ENCODE measurements at regions of chr1 and their contacts with region 1.

Region 1: DNA sequence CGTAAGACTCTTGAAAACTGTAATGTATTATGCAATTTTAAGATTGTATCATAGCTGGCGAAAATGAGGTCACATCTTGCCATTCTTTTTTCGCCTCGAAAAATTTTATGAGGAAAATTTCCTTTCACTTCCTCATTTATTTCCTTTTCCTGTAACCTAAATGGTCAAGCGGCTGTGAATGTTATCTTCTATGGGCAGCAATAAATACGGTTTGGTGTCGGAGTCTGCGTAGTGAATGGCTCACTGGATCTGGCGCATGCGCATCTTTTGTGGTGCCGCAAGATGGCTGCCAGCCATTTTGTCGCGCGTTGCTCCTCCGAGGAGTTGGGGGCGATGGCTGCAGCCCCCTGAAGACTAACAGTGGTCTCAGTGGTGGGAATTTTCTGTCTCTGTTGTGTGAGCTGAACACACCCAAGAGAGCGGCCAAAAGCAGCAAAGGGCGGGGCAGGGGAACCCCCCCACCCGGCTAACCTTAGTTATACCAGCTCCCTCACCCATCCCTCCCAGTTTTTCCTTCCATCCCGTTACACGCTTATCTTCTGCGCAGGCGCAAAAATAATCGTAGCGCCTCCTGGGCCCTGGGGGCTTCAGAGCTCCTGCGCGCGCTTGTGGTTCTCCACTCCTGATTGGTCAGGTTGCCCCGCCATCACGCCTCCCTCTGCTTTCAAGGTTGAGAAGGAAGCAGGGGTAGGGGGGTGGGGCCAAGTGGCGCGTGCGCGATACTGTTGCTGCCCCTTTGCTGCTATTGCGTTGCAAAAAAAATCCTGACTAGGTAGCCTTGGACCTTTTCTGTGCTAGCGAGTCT is at the start of gene RPRD2:
- DNase-seq: peak; percentile 95 to 100 (median 99)
- ATAC-seq: peak; percentile 93
- H3K4me3 ChIP-seq: peak within 1 kb of the TSS; percentile 70
- H3K4me3 Mint-ChIP-seq: peak within 1 kb of the TSS; percentile 100
- H3K27ac ChIP-seq: peak within 1 kb of the TSS; percentile 93 to 97
- H3K27ac Mint-ChIP-seq: peak within 1 kb of the TSS; percentile 96
- H3K4me1 ChIP-seq: peaks cover 17% of the 10 kb centered on the region
- H3K4me1 Mint-ChIP-seq: peaks cover 37% of the 10 kb centered on the region
- H3K27me3 ChIP-seq: no peaks in the 10 kb centered on the region
- H3K27me3 Mint-ChIP-seq: no peaks in the 10 kb centered on the region
- CTCF ChIP-seq: no peak
- total RNA-seq, gene RPRD2: 27.1 to 27.9 TPM

Region 2: GRCh38 chr1:149886396-149887195 is 477.0 kb before region 1 on chr1:
- CTCF ChIA-PET with region 1: no interaction called
- POLR2A ChIA-PET with region 1: interaction called, 61 read pairs
- intact Hi-C with region 1: no loop called
- DNase-seq: peak; percentile 67 to 98 (median 82)
- ATAC-seq: peak; percentile 65
- H3K4me3 ChIP-seq: peak overlapping the region; percentile 87
- H3K4me3 Mint-ChIP-seq: no peak overlapping the region
- H3K27ac ChIP-seq: peak overlapping the region; percentile 91 to 96
- H3K27ac Mint-ChIP-seq: no peak overlapping the region
- H3K4me1 ChIP-seq: peaks cover 31% of the 10 kb centered on the region
- H3K4me1 Mint-ChIP-seq: peaks cover 10% of the 10 kb centered on the region
- H3K27me3 ChIP-seq: no peaks in the 10 kb centered on the region
- H3K27me3 Mint-ChIP-seq: no peaks in the 10 kb centered on the region
- CTCF ChIP-seq: no peak

Region 3: DNA sequence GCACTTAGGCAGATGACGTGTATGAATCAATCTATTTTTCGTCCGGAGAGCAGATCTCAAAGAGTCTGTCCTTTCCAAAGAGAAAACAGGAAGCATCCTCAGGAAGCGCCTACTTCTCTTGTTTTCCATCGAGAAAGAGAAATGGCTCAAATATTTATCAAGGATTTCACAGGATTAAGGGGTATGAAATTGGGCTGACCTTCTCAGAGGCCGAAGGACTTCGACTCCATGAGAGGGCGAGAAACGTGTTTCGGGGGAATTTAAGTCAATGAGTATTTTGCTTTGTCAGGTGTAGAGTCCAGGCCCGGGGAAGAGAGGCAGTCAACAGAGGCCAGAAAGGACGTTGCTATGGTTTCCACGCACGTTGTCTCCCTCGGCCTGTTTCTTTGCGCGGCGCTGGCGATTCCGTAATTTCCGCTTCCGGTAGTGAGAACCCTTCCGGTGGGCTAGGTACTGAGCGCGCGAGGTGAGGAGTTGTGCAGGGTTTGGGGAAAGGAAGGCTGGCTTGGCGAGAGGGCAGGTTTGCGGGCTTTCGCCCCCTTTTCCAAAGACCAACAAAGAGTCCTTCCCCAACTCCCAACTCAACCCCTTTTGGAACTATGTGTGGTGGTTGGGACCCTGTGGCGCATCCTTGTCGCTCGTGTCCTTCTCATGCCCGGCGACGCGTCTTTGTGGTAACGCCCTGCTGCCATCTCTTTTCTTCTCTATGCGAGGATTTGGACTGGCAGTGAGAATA is 70.0 kb before region 1 on chr1 and contains the start of gene MRPS21:
- CTCF ChIA-PET with region 1: no interaction called
- POLR2A ChIA-PET with region 1: interaction called, 3 read pairs
- intact Hi-C with region 1: loop called in 1 of 2 experiments (anchors 5 kb)
- DNase-seq: peak; percentile 73 to 95 (median 80)
- ATAC-seq: peak; percentile 95
- H3K4me3 ChIP-seq: peak within 1 kb of the TSS; percentile 80
- H3K4me3 Mint-ChIP-seq: peak within 1 kb of the TSS; percentile 92
- H3K27ac ChIP-seq: peak within 1 kb of the TSS; percentile 78 to 95
- H3K27ac Mint-ChIP-seq: peak within 1 kb of the TSS; percentile 96
- H3K4me1 ChIP-seq: peaks cover 19% of the 10 kb centered on the region
- H3K4me1 Mint-ChIP-seq: peaks cover 23% of the 10 kb centered on the region
- H3K27me3 ChIP-seq: no peaks in the 10 kb centered on the region
- H3K27me3 Mint-ChIP-seq: no peaks in the 10 kb centered on the region
- CTCF ChIP-seq: no peak
- total RNA-seq, gene MRPS21: 48.5 to 52.0 TPM

Region 4: DNA sequence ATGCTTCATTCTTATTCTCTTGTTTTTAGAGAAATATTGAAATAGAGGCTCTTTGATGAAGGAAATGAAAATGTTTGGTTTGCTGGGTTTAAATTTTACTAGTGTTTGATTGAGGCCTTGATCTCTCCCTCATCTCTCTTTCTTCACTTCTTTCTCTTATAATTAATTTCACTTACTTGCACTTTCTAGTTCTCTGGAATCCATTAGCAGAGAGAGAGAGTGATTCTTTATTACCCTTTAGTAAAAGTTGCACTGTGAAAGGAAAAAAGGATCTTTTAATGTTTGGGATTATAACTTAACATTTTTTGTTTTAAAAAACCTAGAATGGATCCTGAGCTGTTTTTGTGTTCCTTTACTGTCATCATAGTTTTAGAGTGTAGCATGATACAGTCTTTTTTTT is 12.5 kb after region 1 on chr1:
- CTCF ChIA-PET with region 1: no interaction called
- POLR2A ChIA-PET with region 1: interaction called, 27 read pairs
- intact Hi-C with region 1: no loop called
- DNase-seq: no peak
- ATAC-seq: no peak
- H3K4me3 ChIP-seq: no peak overlapping the region
- H3K4me3 Mint-ChIP-seq: no peak overlapping the region
- H3K27ac ChIP-seq: no peak overlapping the region
- H3K27ac Mint-ChIP-seq: peak overlapping the region; percentile 78
- H3K4me1 ChIP-seq: peaks cover 31% of the 10 kb centered on the region
- H3K4me1 Mint-ChIP-seq: peaks cover 64% of the 10 kb centered on the region
- H3K27me3 ChIP-seq: no peaks in the 10 kb centered on the region
- H3K27me3 Mint-ChIP-seq: no peaks in the 10 kb centered on the region
- CTCF ChIP-seq: no peak

Region 5: DNA sequence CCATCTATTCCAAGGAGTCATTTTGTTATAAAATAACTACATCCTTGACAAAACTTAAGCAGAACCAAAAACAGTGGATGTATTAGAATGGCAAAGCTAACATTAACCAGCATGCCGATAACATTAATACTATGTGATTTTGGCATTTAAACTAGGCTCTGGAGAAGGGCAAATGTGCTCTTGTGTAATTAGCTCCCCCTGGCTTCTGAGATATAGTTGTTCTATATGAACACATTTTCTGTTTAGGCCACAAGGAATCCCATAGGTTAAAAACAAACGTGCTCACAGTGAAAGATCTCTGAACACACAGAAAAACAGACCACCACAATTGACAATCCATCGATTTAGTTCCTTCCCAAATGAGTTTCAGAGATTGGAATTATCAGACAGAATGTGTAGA is 66.2 kb after region 1 on chr1:
- CTCF ChIA-PET with region 1: interaction called, 4 read pairs
- POLR2A ChIA-PET with region 1: interaction called, 4 read pairs
- intact Hi-C with region 1: loop called (anchors 2 to 5 kb)
- DNase-seq: peak in 3 of 14 experiments; percentile 35 to 39 (median 36)
- ATAC-seq: peak; percentile 52
- H3K4me3 ChIP-seq: no peak overlapping the region
- H3K4me3 Mint-ChIP-seq: no peak overlapping the region
- H3K27ac ChIP-seq: no peak overlapping the region
- H3K27ac Mint-ChIP-seq: peak overlapping the region; percentile 41
- H3K4me1 ChIP-seq: no peaks in the 10 kb centered on the region
- H3K4me1 Mint-ChIP-seq: peaks cover 18% of the 10 kb centered on the region
- H3K27me3 ChIP-seq: no peaks in the 10 kb centered on the region
- H3K27me3 Mint-ChIP-seq: no peaks in the 10 kb centered on the region
- CTCF ChIP-seq: peak; percentile 54

Region 6: DNA sequence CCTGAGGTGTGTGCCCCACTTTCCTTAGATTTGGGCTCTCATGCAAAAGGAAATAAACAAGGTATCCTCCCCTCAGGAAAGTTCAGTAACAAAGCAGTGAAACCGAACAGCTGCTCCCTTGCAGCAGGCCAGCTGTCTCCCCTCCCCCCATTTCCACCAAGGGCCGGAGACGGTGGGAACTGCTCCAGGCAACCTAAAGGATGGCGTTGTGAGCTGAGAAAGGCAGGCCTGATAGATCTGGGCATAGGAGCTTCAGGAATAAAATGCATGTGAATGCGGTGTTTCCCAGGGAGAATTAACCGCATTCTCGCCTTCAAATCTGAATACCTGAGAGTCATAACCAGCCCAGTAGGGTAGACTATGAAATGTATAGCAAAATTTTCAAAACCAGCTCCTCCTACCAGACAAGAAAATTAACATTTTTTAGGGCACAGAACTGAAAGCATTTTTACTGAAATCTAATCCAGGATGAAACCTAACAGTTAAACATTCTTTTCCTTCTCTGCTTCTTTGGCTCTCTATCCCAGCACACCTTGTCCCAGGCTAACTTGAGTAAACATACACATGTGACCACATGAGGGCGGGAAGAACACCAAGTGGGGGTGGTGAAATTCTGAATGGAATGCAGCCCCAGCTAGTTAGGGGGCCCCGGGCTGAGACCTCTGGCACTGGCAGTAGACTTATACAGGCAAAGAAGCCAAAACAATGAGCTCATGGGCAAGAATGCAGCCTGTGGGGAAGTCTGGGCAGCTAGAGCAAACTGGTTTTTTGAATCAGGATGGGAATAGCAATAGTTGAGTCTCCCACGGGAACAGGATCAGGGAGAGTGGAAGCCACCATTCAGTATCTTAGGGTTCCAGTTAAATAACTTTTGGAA is 204.3 kb after region 1 on chr1:
- CTCF ChIA-PET with region 1: no interaction called
- POLR2A ChIA-PET with region 1: interaction called, 37 read pairs
- intact Hi-C with region 1: no loop called
- DNase-seq: peak in 5 of 14 experiments; percentile 46 to 68 (median 58)
- ATAC-seq: peak; percentile 15
- H3K4me3 ChIP-seq: peak overlapping the region; percentile 50
- H3K4me3 Mint-ChIP-seq: peak overlapping the region; percentile 83
- H3K27ac ChIP-seq: peak overlapping the region; percentile 59 to 97
- H3K27ac Mint-ChIP-seq: peak overlapping the region; percentile 98
- H3K4me1 ChIP-seq: peaks cover 98% of the 10 kb centered on the region
- H3K4me1 Mint-ChIP-seq: peaks cover 92% of the 10 kb centered on the region
- H3K27me3 ChIP-seq: no peaks in the 10 kb centered on the region
- H3K27me3 Mint-ChIP-seq: no peaks in the 10 kb centered on the region
- CTCF ChIP-seq: no peak

Region 7: DNA sequence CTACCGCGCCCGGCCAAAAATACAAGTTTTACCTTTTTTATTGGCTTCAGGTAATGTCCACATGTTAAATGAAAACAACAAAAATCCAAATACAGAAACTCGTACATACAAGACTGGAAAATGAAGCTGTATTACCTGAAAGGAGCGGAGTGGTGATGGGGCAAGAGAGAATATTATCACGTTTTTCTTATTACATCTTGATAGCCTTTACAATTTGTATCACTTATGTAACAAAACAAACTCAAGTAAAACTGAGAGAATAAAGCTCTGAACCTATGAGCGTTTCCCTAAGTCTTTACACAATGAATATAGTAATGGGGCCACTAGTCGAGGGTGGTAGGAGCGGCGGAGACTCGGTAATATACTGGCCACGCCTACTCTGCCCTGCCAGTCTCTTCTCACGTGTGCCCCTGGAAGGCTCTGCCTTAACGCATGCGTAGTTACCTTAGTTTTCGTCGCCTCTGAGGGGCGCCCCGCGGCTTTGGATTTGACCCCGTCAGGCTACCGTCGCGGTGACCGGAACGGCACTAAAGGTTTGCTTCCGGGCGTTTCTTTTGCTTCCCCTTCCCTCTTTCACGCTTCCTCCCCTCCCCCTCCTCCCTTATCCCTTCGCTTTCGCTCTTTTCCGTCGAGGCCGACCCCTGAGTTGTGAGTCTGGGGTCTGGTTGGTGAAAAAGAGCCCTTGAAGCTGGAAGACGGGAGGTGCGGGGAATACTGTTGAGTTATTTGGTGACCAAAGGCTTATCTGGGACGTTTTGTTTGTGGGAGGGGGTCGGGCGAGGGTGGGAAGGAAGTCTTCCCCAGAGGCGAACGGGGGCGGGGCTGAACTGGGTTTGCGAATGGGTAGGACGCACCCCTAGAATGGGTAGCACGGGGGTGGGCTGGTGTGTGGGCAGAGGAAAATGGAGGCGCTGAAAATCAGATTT is 562.5 kb after region 1 on chr1 and contains the start of gene SETDB1:
- CTCF ChIA-PET with region 1: no interaction called
- POLR2A ChIA-PET with region 1: interaction called, 3 read pairs
- intact Hi-C with region 1: loop called in 1 of 2 experiments (anchors 10 kb)
- DNase-seq: peak; percentile 79 to 97 (median 88)
- ATAC-seq: peak; percentile 93
- H3K4me3 ChIP-seq: peak within 1 kb of the TSS; percentile 89
- H3K4me3 Mint-ChIP-seq: peak within 1 kb of the TSS; percentile 94
- H3K27ac ChIP-seq: peak within 1 kb of the TSS; percentile 86 to 88
- H3K27ac Mint-ChIP-seq: peak within 1 kb of the TSS; percentile 92
- H3K4me1 ChIP-seq: peaks cover 15% of the 10 kb centered on the region
- H3K4me1 Mint-ChIP-seq: peaks cover 33% of the 10 kb centered on the region
- H3K27me3 ChIP-seq: no peaks in the 10 kb centered on the region
- H3K27me3 Mint-ChIP-seq: no peaks in the 10 kb centered on the region
- CTCF ChIP-seq: no peak
- total RNA-seq, gene SETDB1: 39.4 to 40.4 TPM

Measured in CD4-positive, alpha-beta T cell (primary cell).